T-cell (primary cell): ENCODE measurements at regions of chr6 and their contacts with region 1.

Region 1: DNA sequence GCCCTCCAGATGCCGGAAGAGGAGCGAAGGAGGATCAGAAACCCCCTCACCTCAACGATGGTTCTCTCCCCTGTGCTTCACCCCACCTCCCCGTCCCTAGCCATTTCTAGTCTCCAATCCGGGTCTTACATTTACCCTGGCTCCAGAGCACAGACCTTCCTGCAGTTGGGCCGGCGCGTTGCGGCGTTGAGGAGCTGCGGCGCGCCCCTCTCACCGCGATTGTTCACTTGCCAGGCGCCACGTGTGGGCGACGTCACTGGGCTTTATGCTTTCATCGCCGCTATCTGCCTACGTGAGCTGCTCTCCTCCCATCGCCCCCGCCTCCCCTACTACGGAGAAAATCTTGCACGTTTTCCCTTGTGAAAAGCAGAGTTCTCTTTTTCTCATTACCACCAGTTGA is at the start of gene CRISP2:
- DNase-seq: no peak
- ATAC-seq: no peak
- H3K4me3 ChIP-seq: no peak within 1 kb of the TSS
- H3K4me3 Mint-ChIP-seq: no peak within 1 kb of the TSS
- H3K27ac ChIP-seq: no peak within 1 kb of the TSS
- H3K27ac Mint-ChIP-seq: no peak within 1 kb of the TSS
- H3K4me1 ChIP-seq: no peaks in the 10 kb centered on the region
- H3K4me1 Mint-ChIP-seq: no peaks in the 10 kb centered on the region
- H3K27me3 ChIP-seq: no peaks in the 10 kb centered on the region
- H3K27me3 Mint-ChIP-seq: no peaks in the 10 kb centered on the region
- total RNA-seq, gene CRISP2: not detected

Region 2: DNA sequence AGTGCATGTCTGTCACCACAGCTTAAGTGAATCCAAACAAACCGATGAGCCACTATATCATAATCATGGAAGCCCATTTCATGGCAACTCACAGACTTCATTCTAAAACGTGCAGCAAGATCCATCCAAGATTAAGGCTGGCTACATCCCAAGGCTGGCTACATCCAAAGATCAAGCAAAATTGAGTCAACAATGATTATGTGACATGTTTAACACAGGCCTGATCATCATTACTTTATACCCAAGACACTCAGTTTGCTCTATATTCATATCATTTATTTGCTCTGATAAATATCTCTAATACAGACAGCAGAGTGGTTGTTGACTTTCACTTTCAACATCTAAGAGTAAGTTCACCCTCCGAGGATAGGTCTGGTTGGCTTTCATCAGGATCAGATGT is 368.3 kb before region 1 on chr6:
- CTCF ChIA-PET with region 1: no interaction called
- POLR2A ChIA-PET with region 1: no interaction called
- DNase-seq: no peak
- ATAC-seq: no peak
- H3K4me3 ChIP-seq: no peak overlapping the region
- H3K4me3 Mint-ChIP-seq: no peak overlapping the region
- H3K27ac ChIP-seq: no peak overlapping the region
- H3K27ac Mint-ChIP-seq: no peak overlapping the region
- H3K4me1 ChIP-seq: no peaks in the 10 kb centered on the region
- H3K4me1 Mint-ChIP-seq: no peaks in the 10 kb centered on the region
- H3K27me3 ChIP-seq: no peaks in the 10 kb centered on the region
- H3K27me3 Mint-ChIP-seq: no peaks in the 10 kb centered on the region

Region 3: GRCh38 chr6:49570474-49571079 is 142.8 kb before region 1 on chr6:
- CTCF ChIA-PET with region 1: interaction called in 1 of 2 experiments, 14 read pairs
- POLR2A ChIA-PET with region 1: no interaction called
- DNase-seq: no peak
- ATAC-seq: no peak
- H3K4me3 ChIP-seq: no peak overlapping the region
- H3K4me3 Mint-ChIP-seq: no peak overlapping the region
- H3K27ac ChIP-seq: no peak overlapping the region
- H3K27ac Mint-ChIP-seq: no peak overlapping the region
- H3K4me1 ChIP-seq: no peaks in the 10 kb centered on the region
- H3K4me1 Mint-ChIP-seq: no peaks in the 10 kb centered on the region
- H3K27me3 ChIP-seq: peaks cover 0 to 3% of the 10 kb centered on the region in 2 experiments
- H3K27me3 Mint-ChIP-seq: peaks cover 5 to 7% of the 10 kb centered on the region in 2 donors